Natural killer cell (primary cell): ENCODE measurements at regions of chr1 and their contacts with region 1.

Region 1: DNA sequence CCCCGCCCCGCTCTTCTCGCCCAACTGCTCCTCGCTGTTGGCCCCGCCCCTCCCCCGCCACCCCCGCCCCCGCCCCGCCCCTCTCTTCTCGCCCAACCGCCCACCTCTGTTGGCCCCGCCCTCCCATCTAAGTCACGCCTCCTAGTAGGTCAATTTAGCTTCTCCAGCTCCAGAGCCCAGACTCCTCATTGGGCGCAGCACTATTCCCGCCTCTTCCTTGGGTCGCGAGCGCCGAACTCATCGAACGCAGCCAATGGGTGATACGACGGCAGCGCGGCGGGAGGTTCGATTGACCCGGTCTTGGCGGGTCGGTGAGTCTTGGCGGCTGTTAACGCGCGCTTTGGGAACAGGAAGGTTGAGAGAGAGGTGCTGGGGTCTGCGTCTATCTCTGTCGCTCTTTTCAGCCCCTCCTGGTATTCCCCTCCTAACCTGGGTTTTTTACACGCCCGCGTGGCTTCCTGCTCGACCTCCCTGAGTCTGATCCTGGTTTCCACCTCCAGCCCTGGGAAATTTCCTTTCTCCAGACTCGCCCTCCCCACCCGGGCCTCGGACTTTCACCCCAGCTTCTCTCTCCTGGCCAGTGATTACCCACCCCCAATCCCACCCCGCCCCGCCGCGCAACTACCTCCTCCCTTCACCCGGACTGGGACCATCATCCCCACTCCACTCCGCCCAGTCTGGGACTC is at the start of gene RAD54L:
- DNase-seq: peak; percentile 92 to 99
- ATAC-seq: peak; percentile 94 to 99 (median 96)
- H3K4me3 ChIP-seq: peak within 1 kb of the TSS; percentile 70
- H3K4me3 Mint-ChIP-seq: peak within 1 kb of the TSS; percentile 89
- H3K27ac ChIP-seq: peak within 1 kb of the TSS; percentile 62
- H3K27ac Mint-ChIP-seq: peak within 1 kb of the TSS; percentile 68 to 89
- H3K4me1 ChIP-seq: peaks cover 19% of the 10 kb centered on the region
- H3K4me1 Mint-ChIP-seq: peaks cover 0 to 21% of the 10 kb centered on the region in 2 donors
- H3K27me3 ChIP-seq: no peaks in the 10 kb centered on the region
- H3K27me3 Mint-ChIP-seq: no peaks in the 10 kb centered on the region
- CTCF ChIP-seq: no peak
- total RNA-seq, gene RAD54L: 1.8 to 2.3 (median 1.8) TPM

Region 2: DNA sequence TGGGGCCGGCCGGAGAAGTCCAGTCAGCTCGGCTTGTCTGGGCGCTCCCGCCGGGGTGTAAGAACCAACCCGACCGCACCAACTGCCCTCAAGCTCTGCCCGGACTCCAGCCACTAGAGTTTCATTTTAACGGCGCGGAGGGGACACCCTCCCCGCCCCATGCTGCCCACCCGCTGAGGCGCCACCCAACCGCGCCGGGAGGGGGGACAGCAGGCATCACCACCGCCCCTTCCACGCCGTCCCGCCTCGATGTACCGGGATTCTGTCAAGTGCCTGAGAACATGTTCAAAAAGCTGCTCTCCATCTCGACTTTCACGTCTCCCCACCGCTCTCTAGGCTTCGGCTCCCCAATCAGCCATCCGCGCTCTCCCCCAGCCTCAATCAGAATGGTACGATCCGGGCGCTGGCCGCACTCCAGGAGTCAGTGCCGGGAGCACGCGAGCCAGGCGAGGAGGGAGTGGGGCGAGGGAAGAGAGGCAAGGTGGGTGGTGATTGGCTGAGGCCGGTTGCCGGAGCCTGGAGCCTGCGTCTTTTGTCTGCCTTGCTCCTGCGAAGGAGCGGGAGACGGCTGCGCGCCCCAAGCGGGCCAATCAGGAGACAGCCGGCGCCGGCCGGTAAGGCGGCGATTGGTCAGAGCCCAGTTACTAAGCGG is 114.9 kb before region 1 on chr1 and contains the start of gene PIK3R3:
- intact Hi-C with region 1: loop called (anchors 2 kb)
- DNase-seq: peak; percentile 72 to 93
- ATAC-seq: peak; percentile 83 to 90 (median 89)
- H3K4me3 ChIP-seq: peak within 1 kb of the TSS; percentile 74
- H3K4me3 Mint-ChIP-seq: peak within 1 kb of the TSS; percentile 100
- H3K27ac ChIP-seq: peak within 1 kb of the TSS; percentile 88
- H3K27ac Mint-ChIP-seq: peak within 1 kb of the TSS; percentile 94 to 98
- H3K4me1 ChIP-seq: peaks cover 16% of the 10 kb centered on the region
- H3K4me1 Mint-ChIP-seq: peaks cover 31 to 32% of the 10 kb centered on the region in 2 donors
- H3K27me3 ChIP-seq: peaks cover 13% of the 10 kb centered on the region
- H3K27me3 Mint-ChIP-seq: peaks cover 13 to 35% of the 10 kb centered on the region in 2 donors
- CTCF ChIP-seq: no peak
- total RNA-seq, gene PIK3R3: 5.2 to 6.2 (median 5.4) TPM

Region 3: DNA sequence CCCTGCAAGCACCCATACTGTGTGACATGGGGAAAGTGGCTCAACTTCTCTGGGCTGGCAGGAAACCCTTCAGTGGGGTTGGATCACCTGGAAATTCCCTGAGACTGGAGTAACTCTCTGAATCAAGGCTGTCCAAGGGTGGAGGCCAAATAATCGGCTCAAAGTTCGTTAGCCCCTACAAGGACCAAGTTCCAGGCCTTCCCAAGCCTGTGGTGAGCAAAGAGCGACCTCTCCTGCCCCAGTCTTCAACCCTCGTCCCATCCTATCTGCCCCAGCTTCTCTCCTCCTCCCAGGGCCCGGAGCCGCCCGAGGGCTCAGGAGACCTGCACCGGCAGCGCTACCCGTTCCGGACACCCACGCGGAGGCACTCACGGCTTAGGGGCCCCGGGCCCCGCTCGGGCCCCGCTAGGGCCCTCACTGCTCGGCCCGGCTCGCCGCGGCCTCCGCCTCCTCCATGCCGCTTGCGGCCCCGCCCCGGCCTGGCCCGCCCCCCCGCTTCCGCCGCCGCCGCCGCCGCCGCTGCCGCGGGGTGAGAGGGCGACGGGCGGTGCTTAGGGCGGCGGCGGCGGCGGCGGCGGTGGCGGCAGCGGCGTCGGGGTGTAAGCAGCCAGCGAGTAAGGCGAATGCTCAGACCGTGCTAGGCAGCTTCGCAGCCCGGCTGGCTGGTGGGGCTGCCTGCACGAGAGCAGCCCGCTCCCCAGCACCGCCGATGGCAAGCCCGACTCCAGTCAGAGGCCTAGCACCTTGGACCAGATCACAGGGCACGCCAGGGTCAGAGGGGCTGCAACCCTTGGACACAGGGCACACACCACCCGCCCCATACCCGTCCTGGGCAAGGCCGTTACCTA is 49.4 kb before region 1 on chr1 and contains the start of gene POMGNT1:
- intact Hi-C with region 1: no loop called
- DNase-seq: peak; percentile 74 to 77
- ATAC-seq: peak; percentile 94 to 96 (median 94)
- H3K4me3 ChIP-seq: peak within 1 kb of the TSS; percentile 76
- H3K4me3 Mint-ChIP-seq: peak within 1 kb of the TSS; percentile 76
- H3K27ac ChIP-seq: peak within 1 kb of the TSS; percentile 60
- H3K27ac Mint-ChIP-seq: peak within 1 kb of the TSS in 1 of 2 donors; percentile 68
- H3K4me1 ChIP-seq: peaks cover 27% of the 10 kb centered on the region
- H3K4me1 Mint-ChIP-seq: peaks cover 6 to 22% of the 10 kb centered on the region in 2 donors
- H3K27me3 ChIP-seq: no peaks in the 10 kb centered on the region
- H3K27me3 Mint-ChIP-seq: peaks cover 3 to 6% of the 10 kb centered on the region in 2 donors
- CTCF ChIP-seq: no peak
- total RNA-seq, gene POMGNT1: 35.8 to 51.3 (median 47.0) TPM

Region 4: GRCh38 chr1:46303038-46303871 is 55.7 kb after region 1 on chr1 and contains the starts of genes LRRC41 and UQCRH:
- intact Hi-C with region 1: loop called (anchors 1 kb)
- DNase-seq: peak; percentile 95 to 96
- ATAC-seq: peak; percentile 80 to 95 (median 86)
- H3K4me3 ChIP-seq: peak within 1 kb of the TSS; percentile 72
- H3K4me3 Mint-ChIP-seq: peak within 1 kb of the TSS; percentile 98
- H3K27ac ChIP-seq: peak within 1 kb of the TSS; percentile 89
- H3K27ac Mint-ChIP-seq: peak within 1 kb of the TSS; percentile 96 to 99
- H3K4me1 ChIP-seq: peaks cover 33% of the 10 kb centered on the region
- H3K4me1 Mint-ChIP-seq: peaks cover 33 to 51% of the 10 kb centered on the region in 2 donors
- H3K27me3 ChIP-seq: no peaks in the 10 kb centered on the region
- H3K27me3 Mint-ChIP-seq: no peaks in the 10 kb centered on the region
- CTCF ChIP-seq: no peak
- total RNA-seq, gene LRRC41: 35.0 to 43.9 (median 35.8) TPM
- total RNA-seq, gene UQCRH: 91.1 to 120 (median 107) TPM

Region 5: GRCh38 chr1:46340404-46341221 is 93.0 kb after region 1 on chr1 and contains the start of gene NSUN4:
- intact Hi-C with region 1: loop called (anchors 2 kb)
- DNase-seq: peak; percentile 85 to 95
- ATAC-seq: peak; percentile 87 to 95 (median 88)
- H3K4me3 ChIP-seq: peak within 1 kb of the TSS; percentile 84
- H3K4me3 Mint-ChIP-seq: peak within 1 kb of the TSS; percentile 100
- H3K27ac ChIP-seq: peak within 1 kb of the TSS; percentile 97
- H3K27ac Mint-ChIP-seq: peak within 1 kb of the TSS; percentile 99
- H3K4me1 ChIP-seq: peaks cover 18% of the 10 kb centered on the region
- H3K4me1 Mint-ChIP-seq: peaks cover 33 to 43% of the 10 kb centered on the region in 2 donors
- H3K27me3 ChIP-seq: no peaks in the 10 kb centered on the region
- H3K27me3 Mint-ChIP-seq: no peaks in the 10 kb centered on the region
- CTCF ChIP-seq: peak; percentile 74
- total RNA-seq, gene NSUN4: 25.9 to 41.0 (median 36.3) TPM